ENCODE measurements at regions of chr9 and their contacts with region 1.

Region 1: DNA sequence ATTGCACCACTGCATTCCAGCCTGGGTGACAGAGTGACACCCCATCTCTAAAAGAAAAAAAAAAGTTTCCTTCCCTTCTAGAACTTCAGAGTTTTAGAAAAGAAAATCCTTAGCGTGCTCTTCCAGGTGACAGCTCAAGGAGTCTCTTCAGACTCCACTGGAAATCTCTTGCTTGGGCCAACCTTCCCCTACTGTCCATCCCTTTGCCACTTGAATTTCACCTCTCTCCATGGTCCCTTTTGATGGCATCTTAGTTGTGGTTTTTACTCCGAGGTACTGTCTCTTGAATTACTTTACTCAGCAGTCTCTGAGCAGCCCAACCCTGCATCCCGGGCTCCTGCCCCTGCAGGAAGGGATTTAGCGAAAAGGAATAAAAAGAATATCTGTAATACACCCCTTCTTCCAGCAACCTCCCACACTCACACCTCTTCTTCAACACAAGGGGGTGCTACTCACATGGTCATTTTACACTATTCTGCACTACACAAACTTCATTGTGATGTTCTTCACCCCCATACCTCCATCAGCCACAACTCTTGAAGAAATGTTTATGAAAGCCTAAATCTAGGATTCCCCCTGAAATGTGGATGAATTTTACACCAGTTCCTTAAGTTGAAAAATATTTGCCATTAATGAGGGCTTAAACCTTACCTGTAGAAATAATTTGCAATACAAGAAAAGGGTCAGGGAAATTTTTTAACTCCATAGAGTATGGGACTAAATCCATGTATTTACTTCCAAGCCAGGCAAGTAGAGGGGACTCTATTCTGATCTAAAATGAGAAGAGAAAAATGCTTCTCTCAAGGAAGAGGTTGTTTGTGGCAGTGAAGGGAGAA is 25.9 kb downstream of the TPD52L3 start:
- DNase-seq: peak in 1 of 10 donors; percentile 15

Region 2: DNA sequence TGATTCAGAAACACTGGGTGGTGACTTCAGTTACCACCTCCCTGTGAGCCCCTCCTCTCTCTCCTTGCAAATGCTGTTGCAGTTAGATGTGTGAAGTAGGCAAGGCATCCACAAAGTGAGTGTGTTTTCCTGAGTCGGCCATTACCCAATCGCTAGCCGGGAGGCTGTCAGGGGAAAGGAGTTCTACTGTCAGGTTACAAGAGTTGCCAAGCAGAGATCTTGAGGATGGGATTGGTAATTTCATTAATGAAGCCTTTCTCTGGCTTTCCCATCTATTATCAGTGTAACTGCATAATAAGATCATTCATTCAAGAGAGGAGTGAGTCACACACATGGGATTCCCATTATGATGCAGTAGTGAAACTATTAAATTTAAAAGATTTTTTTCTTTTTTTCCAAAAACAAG is 184.6 kb after region 1 on chr9:
- intact Hi-C with region 1: no loop called
- DNase-seq: no peak

Region 3: GRCh38 chr9:6566409-6567139 is 212.5 kb after region 1 on chr9:
- intact Hi-C with region 1: loop called (anchors 1 kb)
- DNase-seq: peak in 3 of 10 donors; percentile 16 to 32 (median 31)

Region 4: GRCh38 chr9:6667633-6668280 is 313.7 kb after region 1 on chr9:
- intact Hi-C with region 1: loop called (anchors 1 kb)
- DNase-seq: no peak